ENCODE measurements at regions of chr17 and their contacts with region 1.

Region 1: GRCh38 chr17:40531051-40531991 is 29.9 kb upstream of the TNS4 start:
- DNase-seq: peak; percentile 94
- ATAC-seq: peak; percentile 68
- H3K4me3 Mint-ChIP-seq: peak overlapping the region; percentile 73
- H3K27ac Mint-ChIP-seq: peak overlapping the region; percentile 95
- H3K4me1 Mint-ChIP-seq: peaks cover 70% of the 10 kb centered on the region
- H3K27me3 Mint-ChIP-seq: no peaks in the 10 kb centered on the region
- CTCF ChIP-seq: no peak

Region 2: DNA sequence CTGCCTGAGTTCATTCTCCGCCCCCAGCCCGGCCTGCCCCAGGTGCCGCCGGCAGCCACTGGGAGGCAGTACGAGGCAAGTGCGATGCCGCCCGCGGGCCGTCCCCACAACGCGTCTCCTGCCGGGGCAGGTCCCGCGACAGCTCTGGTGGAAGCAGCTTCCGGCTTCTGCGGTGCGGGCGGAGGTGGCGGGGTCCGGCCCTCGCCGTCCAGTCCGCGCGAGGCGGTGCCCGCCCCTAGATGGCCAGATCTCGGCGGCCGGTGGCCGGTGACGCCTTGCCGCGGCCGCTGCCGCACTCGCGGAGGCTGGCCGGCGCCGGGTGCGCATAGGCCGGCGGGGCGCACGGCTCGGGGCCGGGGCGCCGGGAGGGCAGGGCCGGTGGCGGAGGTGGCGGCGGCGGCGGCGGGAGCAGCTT is 168.6 kb before region 1 on chr17:
- CTCF ChIA-PET with region 1: interaction called, 168 read pairs
- POLR2A ChIA-PET with region 1: interaction called, 6 read pairs
- intact Hi-C with region 1: loop called (anchors 5 kb)
- DNase-seq: peak; percentile 93
- ATAC-seq: peak; percentile 90
- H3K4me3 Mint-ChIP-seq: peak overlapping the region; percentile 72
- H3K27ac Mint-ChIP-seq: no peak overlapping the region
- H3K4me1 Mint-ChIP-seq: peaks cover 6% of the 10 kb centered on the region
- H3K27me3 Mint-ChIP-seq: peaks cover 4% of the 10 kb centered on the region
- CTCF ChIP-seq: peak; percentile 88

Region 3: GRCh38 chr17:40422990-40423616 is 108.2 kb before region 1 on chr17:
- CTCF ChIA-PET with region 1: interaction called, 114 read pairs
- POLR2A ChIA-PET with region 1: interaction called, 24 read pairs
- intact Hi-C with region 1: loop called (anchors 5 kb)
- DNase-seq: no peak
- ATAC-seq: no peak
- H3K4me3 Mint-ChIP-seq: no peak overlapping the region
- H3K27ac Mint-ChIP-seq: no peak overlapping the region
- H3K4me1 Mint-ChIP-seq: peaks cover 37% of the 10 kb centered on the region
- H3K27me3 Mint-ChIP-seq: no peaks in the 10 kb centered on the region
- CTCF ChIP-seq: no peak

Region 4: DNA sequence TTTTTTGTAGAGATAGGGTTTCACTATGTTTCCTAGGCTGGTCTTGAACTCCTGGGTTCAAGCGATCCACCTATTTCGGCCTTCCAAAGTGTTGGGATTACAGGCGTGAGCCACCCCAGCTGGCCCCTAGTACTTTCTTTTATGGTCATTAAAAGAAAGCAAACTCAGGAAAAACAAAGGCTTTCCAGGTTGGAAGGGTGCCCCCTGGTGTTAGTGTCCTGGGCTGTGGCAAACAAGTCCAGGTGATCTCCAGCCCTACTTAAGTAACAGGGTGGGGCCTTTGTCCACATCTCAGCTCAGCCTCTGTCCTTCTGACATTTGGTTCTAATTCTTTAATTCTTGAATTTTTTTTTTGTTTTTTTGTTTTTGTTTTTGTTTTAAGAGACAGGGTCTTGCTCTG is 81.1 kb before region 1 on chr17:
- CTCF ChIA-PET with region 1: interaction called, 97 read pairs
- POLR2A ChIA-PET with region 1: interaction called, 7 read pairs
- intact Hi-C with region 1: no loop called
- DNase-seq: peak; percentile 67
- ATAC-seq: no peak
- H3K4me3 Mint-ChIP-seq: no peak overlapping the region
- H3K27ac Mint-ChIP-seq: no peak overlapping the region
- H3K4me1 Mint-ChIP-seq: peaks cover 17% of the 10 kb centered on the region
- H3K27me3 Mint-ChIP-seq: peaks cover 4% of the 10 kb centered on the region
- CTCF ChIP-seq: peak; percentile 43

Region 5: GRCh38 chr17:40516581-40517285 is 14.6 kb before region 1 on chr17:
- CTCF ChIA-PET with region 1: interaction called, 21 read pairs
- POLR2A ChIA-PET with region 1: interaction called, 13 read pairs
- intact Hi-C with region 1: no loop called
- DNase-seq: peak; percentile 87
- ATAC-seq: peak; percentile 81
- H3K4me3 Mint-ChIP-seq: peak overlapping the region; percentile 66
- H3K27ac Mint-ChIP-seq: peak overlapping the region; percentile 89
- H3K4me1 Mint-ChIP-seq: peaks cover 60% of the 10 kb centered on the region
- H3K27me3 Mint-ChIP-seq: peaks cover 4% of the 10 kb centered on the region
- CTCF ChIP-seq: no peak

Region 6: DNA sequence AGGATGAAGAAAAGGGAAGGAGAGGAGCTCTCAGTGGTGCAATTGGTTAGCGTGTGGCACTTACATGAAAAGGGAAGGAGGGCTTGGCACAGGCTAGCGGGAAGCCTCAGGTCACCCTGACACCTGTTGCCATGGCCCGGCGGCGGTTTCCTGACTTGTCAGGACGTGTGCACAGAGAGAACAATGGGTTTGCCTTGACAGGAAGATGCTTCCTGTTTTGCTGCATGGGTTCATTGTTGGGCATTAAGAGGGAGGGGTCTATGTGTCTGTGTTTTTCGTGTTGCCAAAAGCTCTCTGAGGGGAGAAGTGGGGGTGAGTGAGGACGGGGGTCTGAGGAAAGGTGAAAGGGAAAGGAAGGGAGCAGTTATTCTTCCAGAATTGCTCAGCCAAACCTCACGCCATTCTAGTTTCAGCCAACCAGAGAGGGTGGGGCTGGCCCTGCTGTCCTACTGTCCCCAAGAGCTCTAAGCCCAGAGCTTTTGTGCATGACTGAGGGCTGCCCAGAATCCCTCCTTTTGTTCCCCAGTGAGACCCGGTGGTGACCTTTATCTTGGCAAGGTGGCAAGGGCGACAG is 51.1 kb after region 1 on chr17:
- CTCF ChIA-PET with region 1: interaction called, 13 read pairs
- POLR2A ChIA-PET with region 1: no interaction called
- intact Hi-C with region 1: no loop called
- DNase-seq: peak; percentile 84
- ATAC-seq: peak; percentile 49
- H3K4me3 Mint-ChIP-seq: peak overlapping the region; percentile 62
- H3K27ac Mint-ChIP-seq: peak overlapping the region; percentile 88
- H3K4me1 Mint-ChIP-seq: peaks cover 92% of the 10 kb centered on the region
- H3K27me3 Mint-ChIP-seq: no peaks in the 10 kb centered on the region
- CTCF ChIP-seq: no peak